Left lung (tissue), 14 donors: ENCODE measurements at regions of chr18 and their contacts with region 1.

Region 1: GRCh38 chr18:61502472-61502871 is 169.2 kb downstream of the CDH20 start:
- DNase-seq: peak in 2 of 4 donors; percentile 49 to 62
- ATAC-seq: peak; percentile 81
- H3K4me3 ChIP-seq: no peak overlapping the region
- H3K27ac ChIP-seq: no peak overlapping the region
- H3K4me1 ChIP-seq: no peaks in the 10 kb centered on the region
- H3K27me3 ChIP-seq: peaks cover 0 to 12% of the 10 kb centered on the region in 2 donors
- CTCF ChIP-seq: peak; percentile 55 to 68

Region 2: GRCh38 chr18:60684843-60685513 is 817.5 kb before region 1 on chr18:
- intact Hi-C with region 1: loop called in 1 of 2 experiments (anchors 10 kb)
- DNase-seq: peak in 1 of 4 donors; percentile 5
- ATAC-seq: peak; percentile 49
- H3K4me3 ChIP-seq: no peak overlapping the region
- H3K27ac ChIP-seq: no peak overlapping the region
- H3K4me1 ChIP-seq: no peaks in the 10 kb centered on the region
- H3K27me3 ChIP-seq: no peaks in the 10 kb centered on the region
- CTCF ChIP-seq: peak in 1 of 2 donors; percentile 49

Region 3: DNA sequence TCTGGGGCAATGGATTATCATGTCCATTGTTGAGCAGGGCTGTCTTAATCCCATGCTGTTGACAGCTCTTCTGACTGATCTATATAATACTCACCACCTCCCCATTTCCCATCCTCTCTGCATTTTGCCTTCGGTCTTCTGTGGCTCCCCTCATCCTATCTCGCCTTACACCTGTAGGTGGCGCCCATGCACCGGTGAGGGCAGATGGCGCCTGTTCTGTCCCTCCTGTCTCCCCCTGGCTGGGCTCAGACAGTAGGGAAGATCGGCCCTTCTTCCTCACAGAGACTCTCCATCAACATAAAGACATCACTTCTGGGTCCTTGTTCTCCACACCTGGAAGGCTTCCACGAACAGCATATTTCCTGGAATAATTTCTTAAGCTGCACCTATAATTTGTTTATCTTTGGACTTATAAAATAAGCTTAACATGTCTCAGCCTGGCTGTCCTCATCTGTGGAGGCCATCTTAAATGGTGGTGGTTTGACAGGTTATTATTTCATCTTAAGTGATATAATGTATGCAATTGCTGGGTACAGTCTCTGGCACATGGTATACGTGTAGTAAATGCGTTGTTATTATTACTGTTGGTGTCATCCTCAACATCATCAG is 180.1 kb before region 1 on chr18:
- intact Hi-C with region 1: loop called in 1 of 2 experiments (anchors 5 kb)
- DNase-seq: peak in 2 of 4 donors; percentile 37 to 74
- ATAC-seq: peak; percentile 88
- H3K4me3 ChIP-seq: no peak overlapping the region
- H3K27ac ChIP-seq: no peak overlapping the region
- H3K4me1 ChIP-seq: no peaks in the 10 kb centered on the region
- H3K27me3 ChIP-seq: no peaks in the 10 kb centered on the region
- CTCF ChIP-seq: peak; percentile 50 to 53